Activated T-helper 2 cell treated with anti-CD3 and anti-CD28 coated beads, Interferon-gamma antibody, Interleukin-2, Interleukin-4, amounts not matched to agents 10 μg/mL and 5 μg/mL and 100 μg/mL, durations not matched to agents 14 hours and 24 hours and 36 hours (primary cell): ENCODE measurements at regions of chr7 and their contacts with region 1.

Region 1: DNA sequence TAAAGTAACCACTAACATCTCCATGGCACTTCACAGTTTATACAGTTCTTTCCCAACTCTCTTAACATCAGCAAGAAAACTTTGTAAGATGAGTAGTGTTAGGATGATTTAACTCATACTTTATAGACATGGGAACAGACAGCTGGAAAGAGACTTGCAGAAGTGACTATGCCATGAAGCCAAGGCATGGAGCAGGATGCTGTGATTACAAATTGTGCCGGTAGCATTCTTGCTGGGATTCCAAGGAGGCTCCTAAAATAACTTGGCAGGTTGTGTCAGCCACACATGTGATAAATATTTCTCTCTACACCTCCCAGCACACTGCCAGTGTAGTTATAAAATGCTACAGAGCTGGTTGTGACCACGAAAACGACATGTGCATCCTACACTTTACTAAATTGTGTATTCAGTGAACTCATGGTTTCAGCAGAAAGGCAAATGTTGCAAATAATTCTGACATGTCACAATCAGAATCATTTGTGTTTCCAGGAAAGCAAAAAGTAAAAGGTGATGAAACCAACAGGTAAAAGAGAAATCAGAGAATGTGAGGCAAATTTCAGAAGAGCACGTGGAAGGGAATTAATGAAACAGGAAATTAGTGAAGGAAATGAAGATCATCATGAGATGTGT is 5.6 kb upstream of the CYP3A4 start:
- DNase-seq: no peak
- H3K4me3 Mint-ChIP-seq: no peak overlapping the region
- H3K27ac Mint-ChIP-seq: peak overlapping the region; percentile 15
- H3K4me1 Mint-ChIP-seq: peaks cover 15% of the 10 kb centered on the region
- H3K27me3 Mint-ChIP-seq: peaks cover 7% of the 10 kb centered on the region

Region 2: GRCh38 chr7:99447943-99448342 is 341.6 kb before region 1 on chr7:
- intact Hi-C with region 1: no loop called
- DNase-seq: no peak
- H3K4me3 Mint-ChIP-seq: no peak overlapping the region
- H3K27ac Mint-ChIP-seq: no peak overlapping the region
- H3K4me1 Mint-ChIP-seq: no peaks in the 10 kb centered on the region
- H3K27me3 Mint-ChIP-seq: no peaks in the 10 kb centered on the region

Region 3: DNA sequence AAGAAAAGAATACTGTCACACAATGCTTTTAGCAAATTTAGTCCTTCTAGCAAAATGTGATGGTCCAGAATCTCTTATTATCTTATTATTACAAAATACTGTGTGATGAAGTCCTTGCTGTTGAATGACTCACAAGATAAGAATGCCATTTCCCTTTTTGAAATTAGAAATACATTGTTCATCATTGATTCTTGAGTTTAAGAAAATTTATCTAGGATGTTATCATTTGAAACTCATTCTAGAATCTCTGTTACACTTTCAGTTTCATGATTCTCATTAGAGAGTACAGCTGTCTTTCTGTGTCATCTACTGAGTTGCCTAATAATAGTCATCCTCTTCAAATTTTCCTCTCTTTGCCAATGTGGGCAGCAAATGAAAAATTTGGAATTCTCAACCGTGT is 275.5 kb before region 1 on chr7:
- intact Hi-C with region 1: no loop called
- DNase-seq: no peak
- H3K4me3 Mint-ChIP-seq: no peak overlapping the region
- H3K27ac Mint-ChIP-seq: no peak overlapping the region
- H3K4me1 Mint-ChIP-seq: peaks cover 8% of the 10 kb centered on the region
- H3K27me3 Mint-ChIP-seq: no peaks in the 10 kb centered on the region

Region 4: GRCh38 chr7:99624484-99624883 is 165.1 kb before region 1 on chr7:
- intact Hi-C with region 1: loop called (anchors 5 kb)
- DNase-seq: peak; percentile 72
- H3K4me3 Mint-ChIP-seq: peak overlapping the region; percentile 91
- H3K27ac Mint-ChIP-seq: peak overlapping the region; percentile 97
- H3K4me1 Mint-ChIP-seq: peaks cover 64% of the 10 kb centered on the region
- H3K27me3 Mint-ChIP-seq: no peaks in the 10 kb centered on the region

Region 5: GRCh38 chr7:99740573-99741440 is 48.7 kb before region 1 on chr7:
- intact Hi-C with region 1: no loop called
- DNase-seq: no peak
- H3K4me3 Mint-ChIP-seq: no peak overlapping the region
- H3K27ac Mint-ChIP-seq: no peak overlapping the region
- H3K4me1 Mint-ChIP-seq: peaks cover 8% of the 10 kb centered on the region
- H3K27me3 Mint-ChIP-seq: peaks cover 3% of the 10 kb centered on the region

Region 6: GRCh38 chr7:99767662-99768061 is 21.9 kb before region 1 on chr7:
- intact Hi-C with region 1: loop called (anchors 2 kb)
- DNase-seq: no peak
- H3K4me3 Mint-ChIP-seq: no peak overlapping the region
- H3K27ac Mint-ChIP-seq: no peak overlapping the region
- H3K4me1 Mint-ChIP-seq: peaks cover 10% of the 10 kb centered on the region
- H3K27me3 Mint-ChIP-seq: peaks cover 31% of the 10 kb centered on the region